ENCODE measurements at regions of chr16 and their contacts with region 1.

Region 1: GRCh38 chr16:74463886-74464285 is 42.6 kb upstream of the CLEC18B start:
- DNase-seq: no peak
- H3K4me3 Mint-ChIP-seq: no peak overlapping the region
- H3K27ac Mint-ChIP-seq: no peak overlapping the region
- H3K4me1 Mint-ChIP-seq: no peaks in the 10 kb centered on the region
- H3K27me3 Mint-ChIP-seq: no peaks in the 10 kb centered on the region
- CTCF ChIP-seq: no peak

Region 2: DNA sequence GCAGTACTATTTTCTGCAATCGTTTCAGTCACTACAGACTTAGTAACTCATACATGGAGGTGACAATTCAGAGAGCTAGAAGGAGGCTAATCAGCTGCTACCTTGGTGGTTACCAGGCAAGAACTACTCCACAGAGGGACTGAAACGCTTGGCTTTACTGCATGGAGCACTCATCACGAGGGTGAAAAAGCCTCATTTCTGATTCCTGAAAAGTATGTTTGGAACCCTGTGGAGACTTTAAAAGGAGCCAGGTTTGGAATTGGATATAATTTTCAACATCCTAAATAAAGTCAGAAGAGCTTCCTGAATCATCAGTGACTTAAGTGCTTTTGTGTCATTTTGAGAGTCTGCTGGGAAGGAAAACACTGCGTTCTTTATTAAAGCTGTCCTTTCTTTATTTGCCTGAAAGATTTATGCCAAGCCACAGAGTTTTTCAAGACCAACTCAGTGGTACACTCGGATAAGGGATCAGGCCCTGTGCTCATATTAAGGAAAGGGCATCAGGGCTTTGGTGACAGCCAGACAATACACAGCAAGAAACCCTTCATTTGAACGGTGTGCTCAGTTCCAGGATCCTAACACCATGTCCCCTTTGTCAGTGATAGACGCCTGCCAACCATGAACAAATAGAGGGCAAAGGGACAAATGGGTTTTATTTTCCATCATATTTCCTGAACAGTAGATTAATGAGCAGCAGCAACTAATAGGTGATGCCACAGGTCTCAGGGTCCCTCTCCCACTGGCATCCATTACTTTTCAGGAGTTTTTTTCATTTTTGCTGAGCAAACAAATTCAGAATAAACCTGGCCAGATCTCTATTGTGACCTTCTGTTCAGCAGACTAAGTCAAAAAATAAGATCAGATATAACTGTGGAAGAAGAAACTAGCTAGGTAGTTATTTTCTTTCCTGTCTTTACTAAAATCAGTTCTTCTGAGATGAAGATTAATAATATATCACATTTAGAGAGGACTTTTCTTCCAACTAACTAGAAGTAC is 37.9 kb after region 1 on chr16:
- CTCF ChIA-PET with region 1: no interaction called
- intact Hi-C with region 1: loop called (anchors 2 kb)
- DNase-seq: no peak
- H3K4me3 Mint-ChIP-seq: no peak overlapping the region
- H3K27ac Mint-ChIP-seq: no peak overlapping the region
- H3K4me1 Mint-ChIP-seq: no peaks in the 10 kb centered on the region
- H3K27me3 Mint-ChIP-seq: no peaks in the 10 kb centered on the region
- CTCF ChIP-seq: no peak

Measured in Calu3 (cell line).